Activated naive CD4-positive, alpha-beta T cell treated with anti-CD3 and anti-CD28 coated beads for 36 hours (primary cell): ENCODE measurements at regions of chr15 and their contacts with region 1.

Region 1: DNA sequence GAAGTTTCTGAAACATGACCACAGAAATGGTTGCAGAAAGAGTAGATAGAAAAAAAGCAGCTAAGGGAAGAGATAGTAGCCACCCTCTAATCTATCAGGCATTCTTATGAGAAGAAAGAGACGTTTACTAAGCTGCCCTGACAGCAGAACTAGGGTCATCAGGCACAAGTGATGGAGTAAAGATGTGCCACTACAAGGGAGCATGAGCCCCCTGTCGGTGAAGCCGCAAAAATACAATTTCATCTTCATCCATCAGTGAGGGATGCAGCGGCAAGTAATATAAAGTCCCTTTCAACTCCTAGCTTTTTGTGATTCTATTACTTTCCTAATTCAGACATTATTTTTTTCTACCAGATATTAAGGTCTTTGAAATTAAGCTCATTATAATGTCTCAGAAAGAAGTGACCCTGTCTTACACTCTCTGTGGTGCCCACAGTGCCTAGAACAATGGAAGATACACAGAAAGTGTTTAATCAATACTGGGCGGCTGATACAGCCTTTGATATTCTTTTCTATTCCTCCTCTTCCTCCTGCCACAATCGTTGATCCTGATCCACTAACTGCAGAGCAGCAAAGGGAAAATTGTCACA is 651.6 kb downstream of the NTRK3 start:
- DNase-seq: peak; percentile 25
- H3K4me3 Mint-ChIP-seq: no peak overlapping the region
- H3K27ac Mint-ChIP-seq: no peak overlapping the region
- H3K4me1 Mint-ChIP-seq: no peaks in the 10 kb centered on the region
- H3K27me3 Mint-ChIP-seq: no peaks in the 10 kb centered on the region

Region 2: GRCh38 chr15:85858586-85859375 is 1746.2 kb before region 1 on chr15:
- CTCF ChIA-PET with region 1: no interaction called
- intact Hi-C with region 1: loop called (anchors 10 kb)
- DNase-seq: peak; percentile 87
- H3K4me3 Mint-ChIP-seq: peak overlapping the region; percentile 67
- H3K27ac Mint-ChIP-seq: no peak overlapping the region
- H3K4me1 Mint-ChIP-seq: peaks cover 2% of the 10 kb centered on the region
- H3K27me3 Mint-ChIP-seq: peaks cover 13% of the 10 kb centered on the region

Region 3: GRCh38 chr15:86231864-86232721 is 1372.9 kb before region 1 on chr15:
- CTCF ChIA-PET with region 1: no interaction called
- intact Hi-C with region 1: loop called (anchors 5 kb)
- DNase-seq: peak; percentile 49
- H3K4me3 Mint-ChIP-seq: no peak overlapping the region
- H3K27ac Mint-ChIP-seq: no peak overlapping the region
- H3K4me1 Mint-ChIP-seq: peaks cover 4% of the 10 kb centered on the region
- H3K27me3 Mint-ChIP-seq: peaks cover 30% of the 10 kb centered on the region

Region 4: GRCh38 chr15:87681054-87681453 is 76.1 kb after region 1 on chr15:
- CTCF ChIA-PET with region 1: no interaction called
- intact Hi-C with region 1: no loop called
- DNase-seq: no peak
- H3K4me3 Mint-ChIP-seq: no peak overlapping the region
- H3K27ac Mint-ChIP-seq: no peak overlapping the region
- H3K4me1 Mint-ChIP-seq: peaks cover 28% of the 10 kb centered on the region
- H3K27me3 Mint-ChIP-seq: no peaks in the 10 kb centered on the region